Caco-2 (cell line): ENCODE measurements at regions of chr10 and their contacts with region 1.

Region 1: GRCh38 chr10:59625721-59626522 is 83.7 kb downstream of the SLC16A9 start:
- DNase-seq: peak; percentile 77 to 86
- H3K4me3 ChIP-seq: no peak overlapping the region
- H3K4me3 Mint-ChIP-seq: no peak overlapping the region
- H3K27ac Mint-ChIP-seq: no peak overlapping the region
- H3K4me1 ChIP-seq: peaks cover 3% of the 10 kb centered on the region; the same call in 1 of the 2 replicates
- H3K4me1 Mint-ChIP-seq: peaks cover 6% of the 10 kb centered on the region
- H3K27me3 ChIP-seq: no peaks in the 10 kb centered on the region
- H3K27me3 Mint-ChIP-seq: peaks cover 3% of the 10 kb centered on the region
- CTCF ChIP-seq: peak; percentile 95 to 97

Region 2: DNA sequence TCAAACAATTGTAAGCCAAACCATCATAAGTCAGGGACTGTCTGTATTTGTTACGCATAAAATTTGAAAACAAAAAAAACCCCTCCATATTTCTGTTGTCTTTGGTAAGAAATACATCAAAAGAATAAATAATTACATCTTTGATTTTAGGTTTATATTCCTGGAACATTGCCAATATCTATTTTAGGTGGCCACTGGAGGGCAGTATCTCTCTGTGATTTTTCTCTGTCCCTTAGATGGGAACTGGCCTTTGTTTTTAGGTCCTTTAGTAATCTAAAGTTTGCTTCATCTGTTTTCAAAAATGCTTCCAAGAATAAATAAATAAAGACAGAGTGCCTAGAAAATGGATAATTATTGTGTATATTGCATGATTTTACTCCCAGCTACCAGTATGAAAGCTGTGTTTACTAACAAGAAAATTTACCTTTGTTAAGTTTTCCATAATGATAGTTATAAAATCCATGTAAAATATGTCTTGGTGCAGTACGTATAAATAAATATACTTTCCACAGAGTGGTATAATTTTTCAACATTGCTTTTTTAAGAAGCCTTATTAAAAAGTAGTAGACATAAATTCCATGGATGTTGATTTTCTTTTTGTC is 385.2 kb before region 1 on chr10:
- CTCF ChIA-PET with region 1: no interaction called
- POLR2A ChIA-PET with region 1: no interaction called
- intact Hi-C with region 1: loop called (anchors 1 kb)
- DNase-seq: peak in 1 of 2 experiments; percentile 69
- H3K4me3 ChIP-seq: no peak overlapping the region
- H3K4me3 Mint-ChIP-seq: no peak overlapping the region
- H3K27ac Mint-ChIP-seq: no peak overlapping the region
- H3K4me1 ChIP-seq: no peaks in the 10 kb centered on the region
- H3K4me1 Mint-ChIP-seq: peaks cover 13% of the 10 kb centered on the region
- H3K27me3 ChIP-seq: no peaks in the 10 kb centered on the region
- H3K27me3 Mint-ChIP-seq: no peaks in the 10 kb centered on the region
- CTCF ChIP-seq: peak; percentile 82 to 89

Region 3: DNA sequence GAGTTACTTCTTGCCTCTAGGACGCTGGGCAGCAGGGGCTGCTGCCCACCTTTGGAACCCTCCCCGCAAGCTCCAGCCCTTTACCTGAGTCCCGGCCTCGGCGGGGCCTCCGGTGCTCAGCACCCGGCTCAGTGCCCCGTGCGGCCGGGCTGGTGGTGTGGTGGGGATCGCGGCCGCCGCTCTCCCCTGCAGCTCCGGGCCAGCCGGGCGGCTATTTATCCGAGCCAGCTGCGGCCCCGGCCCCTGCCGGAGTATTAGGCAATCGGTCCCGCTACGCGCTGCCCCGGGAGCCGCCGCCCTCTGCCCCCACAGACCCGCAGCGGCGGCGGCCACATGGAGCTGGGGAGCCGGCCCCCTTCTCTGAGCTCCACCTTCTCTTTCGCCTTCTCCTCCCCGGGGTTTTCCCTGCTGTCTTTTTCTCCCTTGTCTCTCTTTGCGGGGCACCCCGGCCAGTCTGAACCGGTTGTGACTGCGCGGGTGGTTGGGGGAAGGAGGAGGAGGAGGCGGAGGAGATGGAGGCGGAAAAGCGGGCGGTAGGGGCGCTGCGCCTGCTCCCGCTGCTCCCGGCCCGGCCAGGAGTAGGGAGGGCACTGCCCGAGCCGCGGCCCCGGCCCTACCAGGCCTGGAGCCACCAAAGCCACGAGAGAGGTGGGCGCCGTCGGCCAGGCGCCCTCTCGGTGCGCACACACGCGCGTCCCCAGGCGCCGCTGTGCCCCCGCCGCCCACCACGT is 83.6 kb after region 1 on chr10 and contains the start of gene SLC16A9:
- CTCF ChIA-PET with region 1: interaction called, 5 read pairs
- POLR2A ChIA-PET with region 1: no interaction called
- intact Hi-C with region 1: loop called (anchors 5 kb)
- DNase-seq: peak; percentile 67 to 71
- H3K4me3 ChIP-seq: peak within 1 kb of the TSS; percentile 58
- H3K4me3 Mint-ChIP-seq: peak within 1 kb of the TSS; percentile 79
- H3K27ac Mint-ChIP-seq: no peak within 1 kb of the TSS
- H3K4me1 ChIP-seq: no peaks in the 10 kb centered on the region
- H3K4me1 Mint-ChIP-seq: no peaks in the 10 kb centered on the region
- H3K27me3 ChIP-seq: peaks cover 5% of the 10 kb centered on the region
- H3K27me3 Mint-ChIP-seq: peaks cover 37% of the 10 kb centered on the region
- CTCF ChIP-seq: peak; percentile 64 to 65
- total RNA-seq, gene SLC16A9: 0.26 and 0.45 TPM in 2 replicates

Region 4: DNA sequence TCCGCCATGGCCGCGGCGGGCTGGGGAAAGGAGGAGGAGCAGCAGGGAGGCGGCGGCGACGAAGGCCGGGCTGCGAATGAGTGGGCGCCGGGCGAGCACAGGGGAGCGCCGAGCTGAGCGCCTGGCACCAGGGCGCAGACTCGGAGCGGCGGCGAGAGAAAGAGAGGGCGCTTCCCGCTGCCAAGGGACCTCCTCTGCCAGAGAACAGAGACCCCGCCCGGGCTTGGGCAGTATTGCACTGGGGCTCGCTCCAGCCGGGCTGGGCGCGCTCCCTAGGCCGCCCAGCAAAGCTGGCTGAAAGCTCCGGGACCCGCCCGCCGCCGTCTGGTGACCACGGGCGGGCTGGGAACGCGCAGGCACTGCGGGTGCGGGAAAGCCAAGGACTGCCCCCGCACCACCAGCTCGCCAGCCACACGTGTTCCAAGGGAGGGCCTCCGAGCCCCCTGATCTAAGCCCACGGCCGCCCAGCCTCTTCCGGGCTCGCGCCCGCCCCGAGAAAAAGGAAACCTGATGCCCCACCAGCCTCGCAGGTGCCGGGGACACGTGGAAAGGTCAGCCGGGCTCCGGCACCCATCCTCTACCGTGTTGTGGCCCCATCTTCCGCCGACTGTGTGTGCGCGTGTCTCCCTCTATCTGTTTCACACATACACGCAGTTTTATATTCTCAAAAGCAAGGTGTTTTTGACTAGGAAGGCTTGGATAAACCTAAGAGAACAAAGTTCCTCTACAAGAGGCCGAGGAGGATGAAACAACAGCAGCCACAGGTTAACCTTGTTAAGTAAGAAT is 280.7 kb after region 1 on chr10 and contains the start of gene CCDC6:
- CTCF ChIA-PET with region 1: interaction called, 5 read pairs
- POLR2A ChIA-PET with region 1: no interaction called
- intact Hi-C with region 1: loop called (anchors 1 kb)
- DNase-seq: peak; percentile 97 to 100
- H3K4me3 ChIP-seq: peak within 1 kb of the TSS; percentile 93
- H3K4me3 Mint-ChIP-seq: peak within 1 kb of the TSS; percentile 99
- H3K27ac Mint-ChIP-seq: peak within 1 kb of the TSS; percentile 92
- H3K4me1 ChIP-seq: peaks cover 33% of the 10 kb centered on the region
- H3K4me1 Mint-ChIP-seq: peaks cover 45% of the 10 kb centered on the region
- H3K27me3 ChIP-seq: no peaks in the 10 kb centered on the region
- H3K27me3 Mint-ChIP-seq: no peaks in the 10 kb centered on the region
- CTCF ChIP-seq: peak; percentile 92 to 96
- total RNA-seq, gene CCDC6: 113 and 116 TPM in 2 replicates

Region 5: GRCh38 chr10:60099998-60100747 is 474.3 kb after region 1 on chr10:
- CTCF ChIA-PET with region 1: no interaction called
- POLR2A ChIA-PET with region 1: no interaction called
- intact Hi-C with region 1: loop called (anchors 1 kb)
- DNase-seq: peak in 1 of 2 experiments; percentile 73
- H3K4me3 ChIP-seq: no peak overlapping the region
- H3K4me3 Mint-ChIP-seq: no peak overlapping the region
- H3K27ac Mint-ChIP-seq: no peak overlapping the region
- H3K4me1 ChIP-seq: peaks cover 7% of the 10 kb centered on the region; the same call in 1 of the 2 replicates
- H3K4me1 Mint-ChIP-seq: peaks cover 10% of the 10 kb centered on the region
- H3K27me3 ChIP-seq: no peaks in the 10 kb centered on the region
- H3K27me3 Mint-ChIP-seq: no peaks in the 10 kb centered on the region
- CTCF ChIP-seq: peak; percentile 78 to 81